Dendritic cell treated with granulocyte-macrophage colony-stimulating factor and Interleukin-4, amounts not matched to agents 40 ng/mL and 50 ng/mL, for 4 days (primary cell): ENCODE measurements at regions of chr9 and their contacts with region 1.

Region 1: DNA sequence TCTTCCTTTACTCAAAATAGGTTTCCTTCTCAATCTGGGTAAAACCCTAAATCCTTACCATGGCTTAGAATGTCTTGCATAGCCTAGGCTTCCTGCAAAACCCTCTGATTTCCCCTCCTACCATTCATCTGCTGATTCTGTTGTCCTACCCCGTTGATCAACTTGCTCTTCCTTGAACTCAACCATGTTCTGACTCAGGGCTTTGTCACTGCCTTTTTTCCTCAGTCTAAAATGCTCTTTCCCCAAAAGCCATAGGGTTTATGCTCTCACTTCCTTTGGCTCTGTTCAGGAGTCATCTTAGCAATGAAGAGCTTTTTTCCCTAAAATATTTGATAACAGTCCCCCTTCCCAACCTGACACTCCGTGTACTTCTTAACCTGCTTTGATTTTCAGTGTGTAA is 79.4 kb upstream of the IZUMO3 start:
- H3K4me3 Mint-ChIP-seq: no peak overlapping the region
- H3K27ac Mint-ChIP-seq: no peak overlapping the region
- H3K4me1 Mint-ChIP-seq: no peaks in the 10 kb centered on the region
- H3K27me3 Mint-ChIP-seq: no peaks in the 10 kb centered on the region

Region 2: DNA sequence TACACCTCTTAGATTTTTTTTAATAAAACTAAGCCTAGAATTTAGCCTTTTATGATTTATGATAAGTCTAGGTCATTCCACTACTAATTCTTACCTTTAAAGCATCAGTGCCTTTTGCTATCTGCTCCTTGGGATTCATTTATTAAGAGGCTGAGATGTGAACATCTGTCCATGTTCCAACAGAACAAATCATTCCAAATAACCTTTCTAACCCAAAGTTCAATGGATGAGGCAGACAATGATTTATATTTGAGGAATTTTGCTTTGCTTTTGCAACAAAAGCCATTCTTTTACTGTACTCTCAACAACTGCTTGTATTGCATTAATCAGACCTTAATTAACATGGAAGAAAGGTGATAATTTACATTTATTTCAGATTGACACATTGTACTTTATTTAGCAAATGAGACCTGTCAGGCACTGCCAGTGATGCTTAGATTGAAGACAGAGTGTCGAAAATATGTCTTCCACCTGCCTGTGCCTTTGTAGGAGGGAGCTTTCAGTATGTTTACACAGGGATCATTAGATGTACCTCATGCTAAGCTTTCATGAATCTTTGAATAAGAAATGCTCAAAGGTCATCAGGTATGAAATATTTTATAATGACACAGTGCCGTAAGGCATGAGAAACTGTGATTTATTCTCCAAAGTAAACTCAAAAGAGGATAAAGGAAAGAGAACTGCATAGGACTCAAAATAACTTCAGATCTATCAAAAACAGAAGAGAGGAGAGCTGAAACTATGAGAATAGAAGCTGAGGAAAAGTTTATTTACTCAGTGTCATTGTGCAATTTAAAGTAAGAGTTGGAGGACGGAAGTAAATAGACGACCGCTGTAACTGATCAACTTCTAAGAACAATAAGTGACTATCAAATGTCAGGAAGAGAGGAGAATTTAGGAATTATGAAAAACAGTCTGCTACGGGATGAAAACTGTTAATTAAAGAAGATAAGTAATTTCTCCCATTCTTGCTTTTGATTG is 42.7 kb before region 1 on chr9:
- intact Hi-C with region 1: no loop called
- H3K4me3 Mint-ChIP-seq: no peak overlapping the region
- H3K27ac Mint-ChIP-seq: no peak overlapping the region
- H3K4me1 Mint-ChIP-seq: no peaks in the 10 kb centered on the region
- H3K27me3 Mint-ChIP-seq: no peaks in the 10 kb centered on the region

Region 3: DNA sequence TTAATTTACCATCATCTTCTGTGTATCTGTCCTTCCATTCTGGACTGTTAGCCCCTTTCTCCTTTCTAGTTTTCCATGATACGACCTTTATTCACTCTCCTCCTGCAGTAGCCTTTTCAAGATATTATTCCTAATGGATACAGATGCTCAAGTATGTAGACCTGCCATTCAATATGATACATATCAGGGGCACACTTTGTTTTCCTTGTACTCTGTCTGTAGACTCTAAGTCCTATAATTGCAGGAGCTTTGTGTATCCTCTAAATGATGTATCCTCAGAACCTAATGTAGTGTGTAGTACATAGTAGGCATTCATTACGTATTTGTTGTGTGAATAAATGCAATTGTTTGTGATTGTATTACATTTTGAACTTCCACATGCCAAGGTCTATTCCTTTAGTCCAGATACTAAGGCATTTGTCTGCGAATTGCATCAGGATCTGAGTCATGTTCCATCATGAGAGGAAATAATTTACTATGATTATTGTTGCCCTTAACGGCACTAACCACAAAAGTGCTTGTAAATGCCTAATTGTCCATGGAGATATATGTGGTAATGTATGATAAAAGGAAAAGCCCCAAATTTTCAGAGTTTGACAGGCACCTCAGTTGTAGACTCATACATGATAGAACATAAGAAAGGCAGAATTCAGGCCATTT is 22.3 kb before region 1 on chr9:
- intact Hi-C with region 1: loop called (anchors 5 kb)
- H3K4me3 Mint-ChIP-seq: no peak overlapping the region
- H3K27ac Mint-ChIP-seq: no peak overlapping the region
- H3K4me1 Mint-ChIP-seq: no peaks in the 10 kb centered on the region
- H3K27me3 Mint-ChIP-seq: no peaks in the 10 kb centered on the region